ENCODE measurements at regions of chr20 and their contacts with region 1.

Region 1: DNA sequence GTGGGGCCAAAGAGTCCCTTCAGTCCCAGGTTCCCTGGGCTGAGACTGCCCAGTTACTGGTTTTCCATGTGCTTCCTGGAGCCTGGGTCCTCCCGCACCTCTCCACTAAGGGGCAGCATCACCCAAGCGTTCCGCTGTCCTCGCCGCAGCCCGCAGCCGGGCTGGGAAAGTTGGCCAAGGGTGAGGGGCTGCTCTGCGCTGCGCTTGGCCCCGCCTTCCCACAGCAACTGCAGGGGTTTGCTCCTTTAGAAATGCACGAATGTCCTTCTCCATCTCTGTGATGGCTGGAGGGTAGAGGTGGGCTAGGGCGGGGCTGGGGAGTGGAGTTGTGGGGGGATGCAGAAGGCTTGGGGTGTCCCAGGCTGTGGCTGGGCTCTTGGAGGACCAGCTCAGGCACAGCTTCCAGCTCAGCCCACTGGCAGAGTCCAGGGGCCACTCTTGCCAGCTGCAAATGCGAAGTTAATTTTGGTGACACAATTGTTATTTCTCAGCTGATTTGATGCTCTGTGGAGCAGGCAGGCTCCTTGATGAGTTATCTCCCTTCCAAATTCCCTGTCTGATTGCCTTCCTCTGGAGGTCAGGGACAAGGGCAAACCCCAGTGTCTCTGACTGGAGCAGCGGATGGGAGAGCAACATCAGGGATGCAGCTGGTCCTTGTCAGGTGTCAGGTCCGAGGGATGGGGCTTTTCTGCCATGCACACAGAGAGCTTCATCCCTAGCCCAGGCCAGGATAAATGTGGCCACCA is 63.2 kb downstream of the NOL4L start:
- DNase-seq: peak; percentile 72
- ATAC-seq: peak; percentile 78
- H3K4me3 ChIP-seq: no peak overlapping the region
- H3K27ac ChIP-seq: no peak overlapping the region
- H3K4me1 ChIP-seq: peaks cover 48% of the 10 kb centered on the region
- H3K27me3 ChIP-seq: no peaks in the 10 kb centered on the region
- CTCF ChIP-seq: peak; percentile 100
- EP300 ChIP-seq: peak in 1 of 2 experiments; percentile 15; a peak in 1 of 4 replicates
- POLR2A ChIP-seq: no peak
- RAD21 ChIP-seq: peak; percentile 100

Region 2: DNA sequence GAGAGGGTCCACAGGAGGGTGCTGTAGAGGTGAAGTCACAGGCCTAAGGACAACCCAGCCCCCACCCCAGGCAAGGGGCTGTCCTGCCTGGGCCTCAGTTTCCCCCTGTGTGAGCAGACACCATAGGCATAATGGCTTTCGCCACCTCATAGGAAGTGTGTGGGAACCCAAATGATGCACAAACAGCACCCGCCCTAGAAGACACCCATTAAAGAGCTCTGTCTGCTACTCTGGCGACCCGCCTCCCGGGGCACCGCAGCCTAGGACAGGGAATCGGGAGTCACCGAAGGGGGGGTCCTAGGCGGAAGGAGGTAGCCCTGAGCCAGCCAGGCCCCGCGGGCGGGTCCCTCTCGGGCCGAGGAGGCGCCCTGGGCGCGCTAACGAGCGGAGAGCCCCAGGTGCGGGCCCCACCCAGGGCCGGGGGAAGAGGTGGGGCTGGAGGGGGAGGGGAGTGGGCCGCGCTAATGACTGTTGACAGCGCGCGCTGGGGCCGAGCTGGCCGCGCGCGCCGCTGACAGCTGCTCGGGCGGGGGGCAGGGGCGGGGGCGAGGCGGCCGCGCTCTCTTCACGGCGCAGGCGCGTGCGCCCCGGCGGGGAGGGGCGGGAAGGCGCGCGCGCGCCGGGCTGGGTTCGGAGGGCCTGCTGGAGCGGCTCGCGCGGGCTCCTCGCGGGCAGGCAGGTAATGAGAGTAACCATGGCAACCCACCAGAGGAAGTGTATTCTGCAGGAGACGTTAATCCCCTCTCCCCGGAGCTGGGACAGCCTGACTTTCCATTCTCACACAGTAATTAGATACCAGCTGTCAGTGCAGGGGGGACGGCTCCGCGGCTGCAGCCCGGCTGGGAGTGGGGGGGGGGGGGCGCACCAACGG is 14.2 kb after region 1 on chr20:
- CTCF ChIA-PET with region 1: interaction called, 4 read pairs
- POLR2A ChIA-PET with region 1: interaction called, 197 read pairs
- in situ Hi-C with region 1: no loop called
- intact Hi-C with region 1: no loop called
- DNase-seq: peak; percentile 79
- ATAC-seq: peak; percentile 47
- H3K4me3 ChIP-seq: peak overlapping the region; percentile 52 to 70 (median 64); a peak in 5 of 6 replicates
- H3K27ac ChIP-seq: peak overlapping the region; percentile 44
- H3K4me1 ChIP-seq: peaks cover 79% of the 10 kb centered on the region
- H3K27me3 ChIP-seq: no peaks in the 10 kb centered on the region
- CTCF ChIP-seq: no peak; the same call in 1 of the 2 replicates
- EP300 ChIP-seq: no peak
- POLR2A ChIP-seq: no peak
- RAD21 ChIP-seq: no peak; the same call in 1 of the 2 replicates

Region 3: DNA sequence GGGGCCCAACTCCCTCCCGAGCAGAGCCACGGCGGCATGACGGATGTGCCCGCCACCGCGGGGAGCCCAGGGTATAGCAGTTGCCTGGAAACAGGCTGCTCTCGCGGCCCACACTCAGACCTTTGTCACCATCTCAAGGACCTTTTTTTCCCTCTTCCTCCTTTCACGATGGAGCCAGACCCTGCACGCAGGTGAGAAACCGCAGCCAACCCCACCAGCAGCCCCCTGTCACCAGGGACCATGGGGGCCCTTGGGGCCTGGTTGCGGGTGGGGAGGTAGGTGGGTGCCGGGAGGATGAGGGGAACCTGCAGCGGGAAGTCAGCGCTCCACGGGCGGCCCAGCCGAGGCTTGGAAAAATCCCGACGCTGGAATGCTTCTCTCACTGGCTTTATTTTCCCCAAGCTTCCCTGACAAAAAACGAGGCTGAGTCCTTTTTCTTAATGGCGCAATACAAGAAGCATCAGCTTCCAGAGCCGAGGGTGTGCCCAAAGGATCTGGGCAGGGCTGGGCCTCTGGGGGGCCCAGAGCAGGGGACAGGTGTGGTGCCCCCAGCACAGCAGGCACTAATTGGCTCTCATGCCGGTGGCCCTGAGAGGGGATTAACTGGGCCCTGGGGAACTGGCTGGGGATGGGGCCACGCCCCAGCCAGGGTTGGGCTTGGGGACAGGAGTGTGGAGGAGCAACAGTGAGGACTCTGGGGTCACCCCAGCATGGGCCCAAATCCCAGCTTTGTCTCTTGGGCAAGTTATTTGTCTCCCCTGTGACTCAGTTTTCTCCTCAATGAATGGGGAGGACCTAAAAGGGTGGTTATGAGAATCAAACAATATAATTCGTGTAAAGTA is 39.3 kb after region 1 on chr20:
- CTCF ChIA-PET with region 1: no interaction called
- POLR2A ChIA-PET with region 1: interaction called, 10 read pairs
- in situ Hi-C with region 1: no loop called
- intact Hi-C with region 1: loop called (anchors 5 kb)
- DNase-seq: no peak
- ATAC-seq: peak; percentile 28
- H3K4me3 ChIP-seq: peak overlapping the region; percentile 20 to 65 (median 45); a peak in 5 of 6 replicates
- H3K27ac ChIP-seq: peak overlapping the region; percentile 68
- H3K4me1 ChIP-seq: peaks cover 94% of the 10 kb centered on the region
- H3K27me3 ChIP-seq: no peaks in the 10 kb centered on the region
- CTCF ChIP-seq: no peak
- EP300 ChIP-seq: no peak
- POLR2A ChIP-seq: no peak; a peak in 1 of 4 replicates
- RAD21 ChIP-seq: no peak

Region 4: DNA sequence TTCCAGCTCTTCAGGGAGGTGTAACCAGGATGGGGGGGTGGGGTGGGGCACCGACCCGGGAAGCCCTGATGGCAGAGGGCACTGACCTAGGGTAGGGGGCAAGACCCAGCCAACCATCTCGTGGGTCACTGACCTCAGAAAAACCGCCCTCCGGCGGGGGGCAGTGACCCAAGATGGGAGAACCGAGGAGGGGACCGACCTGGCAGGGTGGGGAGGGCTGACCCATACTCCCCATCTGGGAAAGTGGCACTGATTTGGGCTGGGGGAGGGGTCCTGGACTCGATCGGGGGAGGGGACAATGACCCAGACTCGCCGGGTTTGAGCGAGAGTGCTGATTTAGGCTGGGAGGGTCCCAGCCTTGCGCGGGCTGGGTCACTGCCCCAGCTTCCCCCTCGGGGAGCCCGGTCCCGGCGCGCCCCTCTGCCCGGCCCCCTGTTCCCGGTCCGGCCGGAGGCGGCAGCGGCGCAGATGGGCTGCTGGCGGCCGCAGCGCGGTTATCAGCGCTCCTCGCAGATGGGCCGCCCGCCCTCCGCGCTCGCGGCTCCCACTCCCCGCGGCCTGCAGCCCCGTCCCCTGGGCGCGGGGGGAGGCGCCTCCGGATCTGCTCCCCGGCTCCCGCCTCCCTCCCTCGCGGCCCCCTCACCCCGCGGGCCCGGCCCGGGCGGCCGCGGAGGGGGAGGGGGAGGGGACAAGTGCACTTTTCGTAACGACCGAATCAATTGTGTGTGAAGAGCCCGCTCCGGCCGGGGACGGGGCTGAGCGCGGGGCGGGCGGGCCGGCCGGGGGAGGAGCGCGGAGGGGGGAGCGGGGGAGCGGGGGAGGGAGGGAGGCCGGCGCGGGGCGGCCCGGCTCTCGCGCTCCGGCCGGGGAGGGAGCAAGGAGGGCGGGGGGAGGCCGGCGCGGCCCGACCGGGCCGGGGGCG is 61.0 kb after region 1 on chr20:
- CTCF ChIA-PET with region 1: interaction called, 8 read pairs
- POLR2A ChIA-PET with region 1: interaction called, 22 read pairs
- in situ Hi-C with region 1: no loop called
- intact Hi-C with region 1: loop called (anchors 2 kb)
- DNase-seq: no peak
- ATAC-seq: peak; percentile 16
- H3K4me3 ChIP-seq: peak overlapping the region; percentile 65 to 97 (median 70)
- H3K27ac ChIP-seq: peak overlapping the region; percentile 84
- H3K4me1 ChIP-seq: peaks cover 44% of the 10 kb centered on the region
- H3K27me3 ChIP-seq: peaks cover 11 to 25% of the 10 kb centered on the region in 2 experiments; a peak in 4 of 5 replicates
- CTCF ChIP-seq: peak; percentile 2; the same call in 1 of the 2 replicates
- EP300 ChIP-seq: no peak; a peak in 1 of 4 replicates
- POLR2A ChIP-seq: peak in 1 of 2 experiments; percentile 62; a peak in 2 of 4 replicates
- RAD21 ChIP-seq: 0 out of 2 replicates have a peak, but pooled peaks have one; percentile 44

Region 5: DNA sequence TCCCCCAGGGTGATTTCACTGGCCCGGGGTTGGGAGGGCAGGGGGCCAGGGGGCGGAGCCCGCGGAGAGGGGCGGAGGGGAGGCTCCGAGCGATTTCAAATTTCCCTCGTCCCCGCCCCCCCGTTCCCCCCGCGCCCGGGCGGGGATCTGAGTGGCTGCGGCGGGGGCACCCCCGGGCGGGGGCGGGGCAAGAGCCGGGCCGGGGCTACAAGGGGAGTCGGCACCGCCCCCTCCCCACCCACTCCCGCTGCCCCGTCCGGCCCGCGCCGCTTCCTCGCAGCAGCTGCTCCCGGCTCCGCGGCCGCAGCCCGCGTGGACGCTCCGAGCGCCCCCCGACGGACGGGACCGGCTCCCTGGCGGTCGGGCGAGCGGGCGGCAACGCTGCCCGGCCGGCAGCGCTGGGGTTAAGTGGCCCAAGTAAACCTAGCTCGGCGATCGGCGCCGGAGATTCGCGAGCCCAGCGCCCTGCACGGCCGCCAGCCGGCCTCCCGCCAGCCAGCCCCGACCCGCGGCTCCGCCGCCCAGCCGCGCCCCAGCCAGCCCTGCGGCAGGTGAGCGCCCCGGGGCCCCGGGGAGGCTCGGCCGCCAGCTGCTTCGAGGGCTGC is 240.3 kb after region 1 on chr20 and contains the start of gene DNMT3B:
- CTCF ChIA-PET with region 1: no interaction called
- POLR2A ChIA-PET with region 1: no interaction called
- in situ Hi-C with region 1: loop called (anchors 25 kb)
- intact Hi-C with region 1: no loop called
- DNase-seq: peak; percentile 60
- ATAC-seq: peak; percentile 79
- H3K4me3 ChIP-seq: peak within 1 kb of the TSS; percentile 75 to 95 (median 95)
- H3K27ac ChIP-seq: peak within 1 kb of the TSS; percentile 24
- H3K4me1 ChIP-seq: peaks cover 62% of the 10 kb centered on the region
- H3K27me3 ChIP-seq: no peaks in the 10 kb centered on the region; a peak in 1 of 5 replicates
- CTCF ChIP-seq: peak; percentile 49; the same call in 1 of the 2 replicates
- EP300 ChIP-seq: no peak
- POLR2A ChIP-seq: peak; percentile 25 to 76; a peak in 2 of 4 replicates
- RAD21 ChIP-seq: peak; percentile 95
- total RNA-seq, gene DNMT3B: 13.2 and 13.9 TPM in 2 replicates